HCT116 (cell line): ENCODE measurements at regions of chr11 and their contacts with region 1.

Region 1: DNA sequence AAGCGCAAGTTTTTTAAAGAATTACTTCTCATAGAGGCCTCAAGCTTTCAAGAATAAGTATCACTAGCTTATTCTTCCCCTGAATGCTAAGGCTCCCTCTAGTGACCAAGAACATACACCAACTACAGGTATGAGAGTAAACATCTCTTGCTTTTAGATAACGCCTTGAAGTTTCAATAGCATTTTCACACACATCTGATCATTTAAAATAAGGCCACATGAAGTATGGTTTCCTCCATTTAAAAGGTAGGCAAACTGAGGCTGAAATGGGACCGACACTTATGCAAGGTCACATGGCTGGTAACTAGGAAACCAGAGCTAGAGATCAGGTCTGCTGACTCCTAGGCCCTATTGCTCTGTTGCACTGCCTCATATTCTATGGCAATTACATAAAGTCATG is 66.5 kb downstream of the CCDC34 start:
- DNase-seq: peak; percentile 27
- ATAC-seq: peak; percentile 84
- H3K4me3 ChIP-seq: no peak overlapping the region
- H3K27ac ChIP-seq: no peak overlapping the region
- H3K4me1 ChIP-seq: no peaks in the 10 kb centered on the region
- H3K27me3 ChIP-seq: no peaks in the 10 kb centered on the region
- CTCF ChIP-seq: peak; percentile 37 to 72 (median 72); a peak in 5 of 6 replicates
- POLR2A ChIP-seq: no peak
- RAD21 ChIP-seq: peak; percentile 52

Region 2: GRCh38 chr11:27183672-27184457 is 112.6 kb before region 1 on chr11:
- CTCF ChIA-PET with region 1: interaction called, 17 read pairs
- POLR2A ChIA-PET with region 1: no interaction called
- RAD21 ChIA-PET with region 1: interaction called in 1 of 2 experiments, 4 read pairs
- intact Hi-C with region 1: loop called (anchors 5 kb)
- DNase-seq: peak; percentile 51
- ATAC-seq: 0 out of 2 replicates have a peak, but pooled peaks have one; percentile 49
- H3K4me3 ChIP-seq: no peak overlapping the region
- H3K27ac ChIP-seq: no peak overlapping the region
- H3K4me1 ChIP-seq: no peaks in the 10 kb centered on the region
- H3K27me3 ChIP-seq: peaks cover 16% of the 10 kb centered on the region
- CTCF ChIP-seq: peak; percentile 52 to 66 (median 64); a peak in 5 of 6 replicates
- POLR2A ChIP-seq: no peak
- RAD21 ChIP-seq: peak; percentile 78

Region 3: GRCh38 chr11:27281740-27282590 is 14.5 kb before region 1 on chr11:
- CTCF ChIA-PET with region 1: interaction called, 15 read pairs
- POLR2A ChIA-PET with region 1: interaction called, 3 read pairs
- RAD21 ChIA-PET with region 1: no interaction called
- intact Hi-C with region 1: no loop called
- DNase-seq: no peak
- ATAC-seq: no peak
- H3K4me3 ChIP-seq: no peak overlapping the region
- H3K27ac ChIP-seq: no peak overlapping the region
- H3K4me1 ChIP-seq: no peaks in the 10 kb centered on the region
- H3K27me3 ChIP-seq: no peaks in the 10 kb centered on the region
- CTCF ChIP-seq: no peak
- POLR2A ChIP-seq: no peak
- RAD21 ChIP-seq: no peak

Region 4: GRCh38 chr11:27309046-27309445 is 12.5 kb after region 1 on chr11:
- CTCF ChIA-PET with region 1: interaction called, 13 read pairs
- POLR2A ChIA-PET with region 1: no interaction called
- RAD21 ChIA-PET with region 1: no interaction called
- intact Hi-C with region 1: no loop called
- DNase-seq: no peak
- ATAC-seq: no peak
- H3K4me3 ChIP-seq: no peak overlapping the region
- H3K27ac ChIP-seq: no peak overlapping the region
- H3K4me1 ChIP-seq: no peaks in the 10 kb centered on the region
- H3K27me3 ChIP-seq: no peaks in the 10 kb centered on the region
- CTCF ChIP-seq: no peak
- POLR2A ChIP-seq: no peak
- RAD21 ChIP-seq: no peak